B cell (primary cell): ENCODE measurements at regions of chr11 and their contacts with region 1.

Region 1: GRCh38 chr11:2400069-2400760 is at the start of gene TSSC4:
- DNase-seq: peak; percentile 100
- ATAC-seq: peak; percentile 81
- H3K4me3 ChIP-seq: peak within 1 kb of the TSS; percentile 87 to 100 (median 95)
- H3K4me3 Mint-ChIP-seq: peak within 1 kb of the TSS; percentile 90
- H3K27ac ChIP-seq: peak within 1 kb of the TSS; percentile 91 to 93
- H3K27ac Mint-ChIP-seq: peak within 1 kb of the TSS; percentile 98
- H3K4me1 ChIP-seq: peaks cover 26 to 40% of the 10 kb centered on the region in 2 donors
- H3K4me1 Mint-ChIP-seq: peaks cover 25% of the 10 kb centered on the region
- H3K27me3 ChIP-seq: no peaks in the 10 kb centered on the region
- H3K27me3 Mint-ChIP-seq: no peaks in the 10 kb centered on the region
- CTCF ChIP-seq: peak; percentile 94
- total RNA-seq, gene TSSC4: 57.5 and 59.5 TPM in 2 replicates

Region 2: DNA sequence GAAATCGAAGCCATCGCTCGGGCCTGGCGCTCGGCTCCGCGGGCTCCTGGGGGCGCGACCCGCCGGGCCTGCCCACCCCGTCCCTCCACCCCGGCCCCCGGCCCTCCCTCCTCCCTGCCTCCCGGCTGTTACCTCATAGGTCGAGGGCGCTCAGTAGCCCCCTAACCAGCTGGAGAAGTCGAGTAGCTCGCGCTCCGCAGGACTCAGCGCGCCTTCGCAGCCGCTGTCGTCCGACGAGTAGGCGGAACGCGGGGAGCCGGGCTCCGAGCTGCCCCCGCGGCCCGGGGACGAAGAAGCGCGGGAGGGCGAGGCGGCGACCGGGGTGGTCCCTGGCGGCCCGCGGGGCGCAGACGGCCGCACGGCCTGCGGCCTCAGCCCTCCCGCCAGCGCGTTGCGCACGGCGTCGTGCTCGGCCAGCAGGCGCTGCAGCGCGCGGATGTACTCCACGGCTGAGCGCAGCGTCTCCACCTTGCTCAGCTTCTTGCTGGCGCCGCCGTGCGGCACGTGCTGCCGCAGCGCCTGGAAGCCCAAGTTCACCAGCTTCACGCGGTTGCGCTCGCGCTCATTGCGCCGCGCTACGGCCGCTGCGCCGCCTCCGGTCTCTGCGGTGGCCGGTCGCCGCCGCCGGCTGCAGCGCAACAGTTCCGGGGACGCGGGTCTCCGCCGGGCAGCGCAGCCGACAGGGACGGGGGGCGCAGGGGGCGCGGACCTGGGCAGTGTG is 130.5 kb before region 1 on chr11:
- CTCF ChIA-PET with region 1: no interaction called
- POLR2A ChIA-PET with region 1: no interaction called
- intact Hi-C with region 1: loop called (anchors 1 kb)
- DNase-seq: peak; percentile 80
- ATAC-seq: peak; percentile 34
- H3K4me3 ChIP-seq: peak overlapping the region; percentile 31 to 75 (median 52)
- H3K4me3 Mint-ChIP-seq: peak overlapping the region; percentile 84
- H3K27ac ChIP-seq: no peak overlapping the region
- H3K27ac Mint-ChIP-seq: peak overlapping the region; percentile 84
- H3K4me1 ChIP-seq: peaks cover 38 to 48% of the 10 kb centered on the region in 2 donors
- H3K4me1 Mint-ChIP-seq: peaks cover 41% of the 10 kb centered on the region
- H3K27me3 ChIP-seq: peaks cover 0 to 31% (median 9%) of the 10 kb centered on the region in 4 experiments
- H3K27me3 Mint-ChIP-seq: peaks cover 2% of the 10 kb centered on the region
- CTCF ChIP-seq: peak; percentile 36

Region 3: DNA sequence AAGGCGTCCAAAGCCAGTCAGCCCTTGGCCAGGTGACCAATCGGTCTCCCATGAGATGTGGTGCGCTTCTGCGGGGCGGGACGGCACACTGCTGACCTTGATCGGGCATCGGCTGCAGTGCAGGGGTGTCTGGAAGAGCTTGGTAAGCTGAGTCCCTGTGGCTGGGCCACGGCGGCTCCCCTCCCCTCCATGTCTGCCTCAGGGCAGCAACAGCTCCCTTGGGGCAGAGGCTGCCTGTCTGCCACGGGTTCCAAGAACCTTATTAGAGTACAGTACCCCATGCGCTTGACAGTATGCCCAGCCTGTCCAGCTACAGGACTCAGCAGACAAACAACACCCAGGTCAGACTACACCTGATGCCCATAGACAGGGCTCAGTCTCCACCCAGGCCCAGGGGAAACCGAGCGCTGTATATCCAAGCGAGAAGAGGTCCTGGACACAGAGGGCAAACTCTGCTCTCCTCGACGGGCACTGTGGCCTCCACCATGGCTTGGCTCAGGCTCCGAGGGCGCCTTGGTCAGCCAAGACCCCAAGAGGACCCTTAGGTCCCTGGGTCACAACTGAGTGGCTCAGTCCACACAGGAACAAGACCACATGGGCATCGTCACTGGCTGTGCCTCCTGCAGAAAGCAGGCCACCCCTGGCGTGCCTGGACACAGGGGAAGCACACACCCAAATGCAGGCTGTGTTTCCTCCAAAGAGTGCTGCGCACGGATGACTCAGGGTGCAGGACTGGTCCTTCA is 79.5 kb before region 1 on chr11:
- CTCF ChIA-PET with region 1: no interaction called
- POLR2A ChIA-PET with region 1: no interaction called
- intact Hi-C with region 1: no loop called
- DNase-seq: no peak
- ATAC-seq: no peak
- H3K4me3 ChIP-seq: no peak overlapping the region
- H3K4me3 Mint-ChIP-seq: no peak overlapping the region
- H3K27ac ChIP-seq: no peak overlapping the region
- H3K27ac Mint-ChIP-seq: no peak overlapping the region
- H3K4me1 ChIP-seq: peaks cover 0 to 8% of the 10 kb centered on the region in 2 donors
- H3K4me1 Mint-ChIP-seq: no peaks in the 10 kb centered on the region
- H3K27me3 ChIP-seq: peaks cover 0 to 2% (median 0%) of the 10 kb centered on the region in 4 experiments
- H3K27me3 Mint-ChIP-seq: peaks cover 8% of the 10 kb centered on the region
- CTCF ChIP-seq: no peak

Region 4: DNA sequence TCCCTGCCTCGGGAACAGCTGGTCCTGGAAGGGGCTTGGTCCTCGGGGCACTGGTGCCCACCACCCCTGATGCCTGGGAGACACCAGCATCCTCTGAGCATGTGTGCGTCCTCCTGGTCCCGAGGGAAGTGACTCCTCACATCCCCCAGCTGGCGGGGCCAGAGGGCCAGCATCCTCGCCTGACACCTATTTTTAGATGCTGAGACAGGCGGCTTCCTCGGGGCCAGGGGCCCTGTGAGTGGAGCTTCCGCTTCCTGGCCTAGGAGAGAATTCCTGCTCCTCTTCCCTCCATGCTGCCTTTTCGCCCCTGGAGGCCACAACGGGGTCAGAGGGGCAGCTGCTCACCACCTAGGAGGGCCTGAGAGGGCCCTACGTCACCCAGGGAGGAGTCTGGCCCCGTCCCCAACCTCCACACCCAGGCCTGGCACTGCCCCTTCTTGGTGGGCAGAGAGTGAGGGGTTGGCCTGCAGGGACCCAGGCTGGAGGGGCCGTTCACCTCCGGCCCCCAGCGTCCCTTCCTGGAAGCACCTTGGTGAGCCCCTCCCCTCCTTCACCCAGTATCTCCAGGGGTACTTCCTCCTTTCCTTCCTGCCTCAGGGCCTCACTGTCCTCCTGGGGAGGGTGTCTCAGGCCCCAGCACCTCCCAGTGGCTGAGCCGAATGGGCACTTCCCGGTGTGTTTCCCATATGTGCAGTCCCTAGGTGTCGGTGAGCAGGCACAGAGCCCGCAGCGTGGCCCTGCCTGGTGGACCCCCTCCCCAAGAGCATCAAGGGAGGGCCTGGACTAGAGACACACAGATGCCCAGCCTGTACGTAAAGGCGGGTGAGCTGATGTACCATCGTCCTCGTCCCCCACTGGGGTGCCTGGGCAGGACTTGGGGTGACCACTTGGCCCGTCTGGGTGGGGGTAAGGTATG is 17.0 kb before region 1 on chr11:
- CTCF ChIA-PET with region 1: interaction called, 48 read pairs
- POLR2A ChIA-PET with region 1: interaction called, 42 read pairs
- intact Hi-C with region 1: loop called (anchors 1 kb)
- DNase-seq: peak; percentile 65
- ATAC-seq: no peak
- H3K4me3 ChIP-seq: peak overlapping the region in 2 of 5 experiments; percentile 5 to 7
- H3K4me3 Mint-ChIP-seq: peak overlapping the region; percentile 80
- H3K27ac ChIP-seq: peak overlapping the region; percentile 83 to 86
- H3K27ac Mint-ChIP-seq: peak overlapping the region; percentile 94
- H3K4me1 ChIP-seq: peaks cover 89 to 97% of the 10 kb centered on the region in 2 donors
- H3K4me1 Mint-ChIP-seq: peaks cover 89% of the 10 kb centered on the region
- H3K27me3 ChIP-seq: no peaks in the 10 kb centered on the region
- H3K27me3 Mint-ChIP-seq: no peaks in the 10 kb centered on the region
- CTCF ChIP-seq: no peak